ENCODE measurements at regions of chr11 and their contacts with region 1.

Region 1: DNA sequence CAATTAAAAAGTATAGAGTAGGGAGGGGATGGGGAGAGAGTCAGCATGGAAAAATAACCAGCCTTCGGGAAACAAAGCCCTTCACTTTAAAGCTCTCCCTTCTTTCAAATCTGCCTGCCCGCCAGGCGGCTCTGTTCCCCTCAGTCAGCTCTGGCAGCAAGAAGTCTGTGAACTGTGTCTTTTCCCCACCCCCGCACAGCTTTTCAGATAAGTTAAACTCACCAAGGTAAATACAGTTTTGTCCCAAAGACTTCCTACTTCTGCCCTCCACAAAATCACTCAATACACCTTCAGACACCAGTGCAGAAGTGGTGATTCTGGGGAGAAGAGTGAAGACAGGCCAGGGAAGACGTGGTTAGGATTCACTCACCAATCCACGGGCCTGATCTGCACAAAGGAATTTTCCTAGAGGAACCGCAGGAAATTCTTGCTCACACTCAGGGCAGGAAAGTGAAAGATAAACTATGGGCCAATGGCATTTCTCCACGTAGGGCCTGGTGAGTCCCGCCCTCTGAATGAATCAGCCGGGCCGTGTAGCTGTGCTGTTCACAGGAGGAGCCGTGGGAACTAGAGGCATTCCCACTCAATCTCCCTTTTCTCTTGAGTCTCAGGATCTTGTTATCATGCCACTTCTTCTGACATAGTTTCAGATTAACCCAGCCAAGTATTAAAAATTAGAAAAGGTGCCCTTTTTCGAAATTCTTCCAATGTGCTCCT is at the start of gene TRIM5:
- DNase-seq: peak; percentile 93
- total RNA-seq, gene TRIM5: 6.4 TPM

Region 2: DNA sequence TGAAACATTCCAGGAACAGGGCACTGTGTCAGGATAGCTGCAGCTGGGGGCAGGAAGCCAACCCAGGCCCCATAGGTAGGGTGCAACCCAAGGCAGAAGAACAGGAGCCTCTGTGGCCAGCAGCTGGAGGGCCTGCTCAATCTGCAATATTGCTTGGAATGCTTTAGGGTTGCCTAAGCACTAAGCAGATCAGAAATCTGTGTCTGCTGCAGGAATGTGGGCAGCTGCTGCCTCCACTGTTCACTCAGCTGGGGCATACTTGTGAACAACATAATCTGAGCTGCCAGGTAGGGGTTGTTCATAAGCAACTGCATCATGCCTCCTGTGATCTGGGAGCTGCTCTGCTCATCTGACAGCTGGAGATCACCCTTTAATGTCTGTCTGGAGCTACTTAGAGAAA is 170.0 kb before region 1 on chr11:
- intact Hi-C with region 1: no loop called
- DNase-seq: no peak

Region 3: DNA sequence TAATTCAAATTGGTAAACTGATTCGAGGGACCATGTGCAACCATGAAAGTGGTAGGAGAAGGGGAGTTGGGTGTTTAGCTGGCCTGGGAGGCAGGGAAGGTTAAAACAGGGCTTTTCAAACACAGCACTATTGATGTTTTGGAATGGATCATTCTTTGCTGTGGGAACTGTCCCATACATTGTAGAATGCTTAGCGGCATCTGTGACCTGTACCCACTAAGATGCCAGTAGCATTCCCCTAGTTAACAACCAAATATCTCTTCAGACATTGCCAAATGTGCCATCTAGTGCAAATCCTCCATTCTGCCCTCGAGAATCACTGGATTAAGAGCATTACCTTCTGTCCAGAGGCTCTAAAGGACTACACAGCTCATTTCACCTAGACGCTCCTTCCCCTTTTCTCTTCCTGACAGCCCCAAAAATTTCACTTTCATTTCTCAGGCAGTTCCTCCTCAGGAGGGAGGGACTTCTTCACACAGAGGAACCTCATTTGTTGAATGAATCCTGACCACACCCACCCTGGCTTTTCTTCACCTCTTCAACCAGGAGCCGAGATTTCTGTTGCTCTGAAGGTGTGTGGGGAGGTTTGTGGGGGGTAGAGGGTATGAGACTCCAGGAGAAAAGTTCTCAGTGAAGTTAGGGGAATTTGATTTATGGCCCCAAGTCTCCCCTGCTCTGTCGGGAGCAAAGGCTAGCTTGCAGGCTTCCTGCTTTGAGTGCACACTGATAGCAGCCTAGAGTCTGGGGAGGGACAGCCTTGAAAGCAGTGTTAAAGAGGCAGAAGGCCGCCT is 60.1 kb before region 1 on chr11 and contains the start of gene TRIM34:
- intact Hi-C with region 1: loop called (anchors 10 kb)
- DNase-seq: no peak
- total RNA-seq, gene TRIM34: 2.3 TPM